ENCODE measurements at regions of chr1 and their contacts with region 1.

Region 1: DNA sequence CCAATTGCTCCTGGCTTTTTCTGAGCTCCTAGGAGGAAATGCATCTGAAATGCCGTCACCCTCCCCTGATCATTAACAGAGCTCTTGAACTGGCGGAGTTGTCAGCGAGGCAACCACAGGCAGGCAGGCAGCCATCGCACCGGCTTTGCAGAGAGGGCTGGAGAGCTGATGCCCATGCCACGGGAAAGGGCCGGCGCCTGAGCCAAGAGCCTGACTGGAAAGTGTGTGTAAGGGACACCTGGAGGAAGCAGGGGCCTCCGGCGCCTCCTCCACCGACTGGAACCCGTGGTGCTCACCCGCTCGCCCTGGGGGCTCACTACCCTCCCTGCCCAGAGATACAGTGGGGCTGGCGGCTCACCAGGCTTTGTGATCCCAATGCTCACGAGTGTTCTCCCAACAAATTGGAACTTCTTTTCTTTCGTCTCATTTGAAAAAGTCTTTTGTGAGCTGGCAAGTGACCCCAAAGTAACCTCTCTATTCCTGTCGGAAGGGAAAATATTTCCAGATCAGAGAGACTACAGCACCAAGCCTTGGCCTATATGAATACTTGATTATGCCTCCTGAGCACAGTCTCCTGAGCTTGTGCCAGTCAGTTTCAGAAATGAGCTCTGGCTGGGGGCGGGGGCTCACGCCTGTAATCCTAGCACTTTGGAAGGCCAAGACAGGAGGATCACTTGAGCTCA is 97.7 kb upstream of the SLC25A33 start:
- DNase-seq: peak; percentile 69 to 79
- ATAC-seq: peak; percentile 17 to 62 (median 44)
- H3K4me3 ChIP-seq: no peak overlapping the region
- H3K27ac ChIP-seq: peak overlapping the region; percentile 80
- H3K4me1 ChIP-seq: peaks cover 69% of the 10 kb centered on the region
- H3K27me3 ChIP-seq: no peaks in the 10 kb centered on the region
- CTCF ChIP-seq: no peak

Region 2: GRCh38 chr1:9376886-9377333 is 64.7 kb before region 1 on chr1:
- intact Hi-C with region 1: loop called in 1 of 2 experiments (anchors 5 kb)
- DNase-seq: peak; percentile 78 to 93
- ATAC-seq: peak; percentile 55 to 90 (median 86)
- H3K4me3 ChIP-seq: peak overlapping the region; percentile 10
- H3K27ac ChIP-seq: peak overlapping the region; percentile 32
- H3K4me1 ChIP-seq: peaks cover 31% of the 10 kb centered on the region
- H3K27me3 ChIP-seq: no peaks in the 10 kb centered on the region
- CTCF ChIP-seq: no peak

Region 3: DNA sequence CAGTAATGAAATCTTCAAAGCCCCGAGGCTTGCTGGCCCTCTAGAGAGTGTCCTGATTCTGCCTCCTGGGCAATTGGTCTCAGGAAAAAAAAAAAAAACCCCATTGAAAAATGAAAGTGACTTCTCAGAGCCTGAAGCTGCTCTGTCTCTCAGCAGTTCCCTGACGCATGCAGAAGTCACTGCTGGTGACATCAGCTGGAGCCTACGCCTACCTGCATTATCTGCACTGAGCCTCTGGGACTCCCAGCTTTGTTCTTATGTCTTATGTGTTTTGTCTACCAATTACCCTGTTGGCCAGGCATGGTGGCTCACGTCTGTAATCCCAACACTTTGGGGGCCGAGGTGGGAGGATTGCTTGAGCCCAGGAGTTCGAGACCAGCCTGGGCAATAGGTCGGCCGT is 87.6 kb after region 1 on chr1:
- intact Hi-C with region 1: no loop called
- DNase-seq: no peak
- ATAC-seq: no peak
- H3K4me3 ChIP-seq: no peak overlapping the region
- H3K27ac ChIP-seq: no peak overlapping the region
- H3K4me1 ChIP-seq: no peaks in the 10 kb centered on the region
- H3K27me3 ChIP-seq: no peaks in the 10 kb centered on the region
- CTCF ChIP-seq: no peak

Region 4: GRCh38 chr1:9596415-9597123 is 155.0 kb after region 1 on chr1:
- intact Hi-C with region 1: no loop called
- DNase-seq: no peak
- ATAC-seq: peak in 3 of 4 donors; percentile 17 to 37 (median 26)
- H3K4me3 ChIP-seq: no peak overlapping the region
- H3K27ac ChIP-seq: no peak overlapping the region
- H3K4me1 ChIP-seq: peaks cover 51% of the 10 kb centered on the region
- H3K27me3 ChIP-seq: no peaks in the 10 kb centered on the region
- CTCF ChIP-seq: no peak